ENCODE measurements at regions of chr2 and their contacts with region 1.

Region 1: DNA sequence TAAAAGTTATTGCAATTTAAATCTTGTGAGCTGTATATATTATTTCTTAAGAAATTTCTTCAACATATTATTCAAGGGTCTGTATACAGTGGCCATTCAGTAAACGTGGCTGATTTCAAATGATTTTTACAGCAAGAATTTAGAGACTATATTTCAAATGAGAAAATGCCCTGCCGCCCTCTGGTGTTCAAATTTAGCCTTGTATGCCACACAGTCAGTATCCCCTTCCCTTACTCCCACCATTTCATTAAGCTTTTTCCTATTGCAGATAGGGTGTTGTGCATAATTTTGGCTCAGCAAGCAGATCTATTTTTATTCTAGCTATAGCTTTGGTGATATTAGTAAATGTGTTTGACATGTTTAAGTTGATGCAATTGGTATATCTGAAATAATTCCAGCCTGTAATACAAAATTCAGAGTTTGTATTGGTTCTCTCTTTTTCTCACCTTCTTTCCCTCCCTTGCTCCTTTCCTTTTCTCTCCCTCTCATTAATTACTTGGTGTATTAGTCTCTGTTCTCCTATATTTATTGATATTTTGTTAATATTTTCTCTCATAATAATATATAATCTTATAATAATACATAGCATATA is 22.8 kb upstream of the SCN7A start:
- DNase-seq: no peak
- H3K4me3 Mint-ChIP-seq: no peak overlapping the region
- H3K27ac Mint-ChIP-seq: no peak overlapping the region
- H3K4me1 Mint-ChIP-seq: no peaks in the 10 kb centered on the region
- H3K27me3 Mint-ChIP-seq: no peaks in the 10 kb centered on the region

Region 2: GRCh38 chr2:166329465-166329864 is 187.3 kb before region 1 on chr2:
- intact Hi-C with region 1: no loop called
- DNase-seq: no peak
- H3K4me3 Mint-ChIP-seq: no peak overlapping the region
- H3K27ac Mint-ChIP-seq: no peak overlapping the region
- H3K4me1 Mint-ChIP-seq: no peaks in the 10 kb centered on the region
- H3K27me3 Mint-ChIP-seq: no peaks in the 10 kb centered on the region

Region 3: DNA sequence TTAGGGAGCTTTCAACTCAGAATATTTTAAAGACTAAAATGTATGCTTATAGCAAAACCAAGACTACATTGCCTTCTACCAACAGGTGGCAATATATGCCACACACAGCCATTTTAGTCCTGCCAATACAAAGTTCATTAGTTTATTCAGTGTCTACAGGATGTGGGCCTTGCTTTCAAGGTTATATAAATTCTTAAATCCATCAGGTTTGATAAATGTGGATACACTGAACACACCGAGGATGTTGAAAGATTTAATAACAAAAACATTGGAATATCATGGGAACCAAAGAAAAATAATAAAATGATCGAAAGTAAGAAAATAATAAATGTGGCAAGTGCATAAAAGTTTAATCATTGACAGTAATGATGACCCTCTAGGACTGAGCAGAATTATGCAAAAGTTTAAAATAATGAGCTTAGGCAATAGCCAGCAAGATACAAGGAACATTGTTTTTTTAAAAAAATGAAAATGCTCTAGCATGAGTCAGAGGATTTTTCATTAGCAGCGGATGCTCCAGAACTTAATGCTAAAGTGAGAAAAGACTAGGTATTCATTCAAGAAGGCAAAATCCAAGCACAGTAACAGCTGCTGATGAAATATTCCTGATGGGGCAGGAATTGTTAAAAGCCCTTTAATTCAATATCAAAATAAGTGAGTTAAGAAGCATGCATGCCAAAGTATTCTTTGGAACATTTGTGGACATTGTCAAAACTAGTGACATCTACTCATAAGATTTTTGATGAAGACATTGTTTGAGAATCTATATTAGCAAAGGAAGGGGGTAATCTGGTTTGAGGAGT is 155.3 kb before region 1 on chr2:
- intact Hi-C with region 1: loop called (anchors 2 kb)
- DNase-seq: no peak
- H3K4me3 Mint-ChIP-seq: no peak overlapping the region
- H3K27ac Mint-ChIP-seq: no peak overlapping the region
- H3K4me1 Mint-ChIP-seq: no peaks in the 10 kb centered on the region
- H3K27me3 Mint-ChIP-seq: no peaks in the 10 kb centered on the region

Region 4: DNA sequence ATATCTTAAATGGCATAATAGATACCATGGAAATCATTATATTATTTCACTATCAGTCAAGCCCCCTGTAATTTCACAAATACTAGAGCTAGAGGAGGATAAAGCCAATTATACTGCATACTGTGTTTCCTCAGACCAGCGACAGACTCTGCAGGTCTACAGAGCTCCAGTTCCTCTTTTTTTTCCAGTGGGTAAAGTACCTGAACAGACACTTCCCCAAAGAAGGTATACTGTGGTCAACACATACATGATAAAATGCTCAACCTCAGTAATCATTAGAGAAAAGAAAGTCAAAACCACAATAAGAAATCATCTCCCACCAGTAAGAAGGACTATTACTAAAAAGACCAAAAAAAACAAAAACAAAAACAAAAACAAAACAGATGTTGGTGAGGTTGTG is 67.4 kb before region 1 on chr2:
- intact Hi-C with region 1: no loop called
- DNase-seq: no peak
- H3K4me3 Mint-ChIP-seq: no peak overlapping the region
- H3K27ac Mint-ChIP-seq: no peak overlapping the region
- H3K4me1 Mint-ChIP-seq: no peaks in the 10 kb centered on the region
- H3K27me3 Mint-ChIP-seq: no peaks in the 10 kb centered on the region

Region 5: DNA sequence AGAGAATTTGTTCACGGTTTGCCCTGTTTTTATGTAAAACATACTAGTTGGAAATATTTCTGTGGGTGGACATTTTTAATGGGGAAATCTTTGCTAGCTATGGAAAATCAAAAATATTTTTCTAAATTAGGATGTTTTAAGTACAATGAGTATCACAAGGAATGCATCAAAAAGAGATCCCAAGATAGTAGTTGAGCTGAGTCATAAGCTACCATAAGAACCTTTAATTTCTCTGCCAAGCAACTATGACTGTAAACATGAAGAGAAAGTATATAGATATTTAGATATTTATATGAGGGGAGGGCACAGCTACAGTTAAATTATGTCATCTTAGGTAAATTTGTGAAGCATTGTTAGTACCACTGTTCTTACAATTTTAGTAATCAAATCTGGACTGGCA is 1017.6 kb after region 1 on chr2:
- intact Hi-C with region 1: no loop called
- DNase-seq: no peak
- H3K4me3 Mint-ChIP-seq: no peak overlapping the region
- H3K27ac Mint-ChIP-seq: no peak overlapping the region
- H3K4me1 Mint-ChIP-seq: no peaks in the 10 kb centered on the region
- H3K27me3 Mint-ChIP-seq: no peaks in the 10 kb centered on the region